Activated CD8-positive, alpha-beta T cell treated with anti-CD3 and anti-CD28 coated beads for 36 hours (primary cell): ENCODE measurements at regions of chr7 and their contacts with region 1.

Region 1: GRCh38 chr7:93902777-93903423 is 3.5 kb upstream of the GNGT1 start:
- DNase-seq: peak; percentile 26
- ATAC-seq: no peak
- H3K4me3 Mint-ChIP-seq: no peak overlapping the region
- H3K27ac Mint-ChIP-seq: no peak overlapping the region
- H3K4me1 Mint-ChIP-seq: no peaks in the 10 kb centered on the region
- H3K27me3 Mint-ChIP-seq: peaks cover 4% of the 10 kb centered on the region
- CTCF ChIP-seq: peak; percentile 72

Region 2: GRCh38 chr7:93736668-93737369 is 166.1 kb before region 1 on chr7:
- CTCF ChIA-PET with region 1: no interaction called
- POLR2A ChIA-PET with region 1: no interaction called
- intact Hi-C with region 1: no loop called
- DNase-seq: no peak
- ATAC-seq: no peak
- H3K4me3 Mint-ChIP-seq: no peak overlapping the region
- H3K27ac Mint-ChIP-seq: no peak overlapping the region
- H3K4me1 Mint-ChIP-seq: no peaks in the 10 kb centered on the region
- H3K27me3 Mint-ChIP-seq: no peaks in the 10 kb centered on the region
- CTCF ChIP-seq: no peak

Region 3: DNA sequence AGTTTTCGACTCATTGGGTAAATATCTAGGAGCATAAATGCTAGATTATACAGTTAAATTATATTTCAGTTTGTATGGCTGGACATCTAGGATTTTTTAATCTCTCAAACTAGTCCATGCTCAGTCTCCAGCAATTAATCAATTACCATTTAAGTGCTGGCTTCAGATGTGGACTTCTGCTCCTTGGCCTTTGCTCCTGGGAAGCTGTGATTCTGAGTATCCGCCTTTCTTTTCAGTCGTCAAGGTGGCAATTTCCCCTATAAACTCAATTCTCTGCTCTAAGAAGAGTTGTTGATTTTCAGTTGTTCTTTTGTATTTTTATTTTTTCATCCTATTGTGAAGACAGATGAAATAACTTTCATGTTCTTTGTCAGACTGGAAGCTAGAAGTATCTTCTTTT is 36.0 kb before region 1 on chr7:
- CTCF ChIA-PET with region 1: no interaction called
- POLR2A ChIA-PET with region 1: no interaction called
- intact Hi-C with region 1: no loop called
- DNase-seq: no peak
- ATAC-seq: no peak
- H3K4me3 Mint-ChIP-seq: no peak overlapping the region
- H3K27ac Mint-ChIP-seq: no peak overlapping the region
- H3K4me1 Mint-ChIP-seq: no peaks in the 10 kb centered on the region
- H3K27me3 Mint-ChIP-seq: no peaks in the 10 kb centered on the region
- CTCF ChIP-seq: no peak

Region 4: GRCh38 chr7:94087664-94088352 is 184.9 kb after region 1 on chr7:
- CTCF ChIA-PET with region 1: interaction called, 14 read pairs
- POLR2A ChIA-PET with region 1: no interaction called
- intact Hi-C with region 1: loop called (anchors 2 kb)
- DNase-seq: peak; percentile 67
- ATAC-seq: peak; percentile 95
- H3K4me3 Mint-ChIP-seq: peak overlapping the region; percentile 2
- H3K27ac Mint-ChIP-seq: peak overlapping the region; percentile 23
- H3K4me1 Mint-ChIP-seq: peaks cover 6% of the 10 kb centered on the region
- H3K27me3 Mint-ChIP-seq: peaks cover 22% of the 10 kb centered on the region
- CTCF ChIP-seq: peak; percentile 76